ENCODE measurements at regions of chr1 and their contacts with region 1.

Region 1: GRCh38 chr1:179293340-179294327 is at the start of gene SOAT1:
- DNase-seq: peak; percentile 93
- H3K4me3 Mint-ChIP-seq: peak within 1 kb of the TSS; percentile 95
- H3K27ac Mint-ChIP-seq: peak within 1 kb of the TSS; percentile 89
- H3K4me1 Mint-ChIP-seq: peaks cover 41% of the 10 kb centered on the region
- H3K27me3 Mint-ChIP-seq: no peaks in the 10 kb centered on the region
- total RNA-seq, gene SOAT1: 55.7 to 58.3 TPM

Region 2: GRCh38 chr1:179187043-179187442 is 106.6 kb before region 1 on chr1:
- CTCF ChIA-PET with region 1: no interaction called
- POLR2A ChIA-PET with region 1: no interaction called
- DNase-seq: no peak
- H3K4me3 Mint-ChIP-seq: no peak overlapping the region
- H3K27ac Mint-ChIP-seq: no peak overlapping the region
- H3K4me1 Mint-ChIP-seq: peaks cover 13% of the 10 kb centered on the region
- H3K27me3 Mint-ChIP-seq: no peaks in the 10 kb centered on the region

Region 3: GRCh38 chr1:179206812-179207211 is 86.8 kb before region 1 on chr1:
- CTCF ChIA-PET with region 1: no interaction called
- POLR2A ChIA-PET with region 1: no interaction called
- DNase-seq: no peak
- H3K4me3 Mint-ChIP-seq: no peak overlapping the region
- H3K27ac Mint-ChIP-seq: no peak overlapping the region
- H3K4me1 Mint-ChIP-seq: peaks cover 5% of the 10 kb centered on the region
- H3K27me3 Mint-ChIP-seq: no peaks in the 10 kb centered on the region

Region 4: GRCh38 chr1:179229214-179230140 is 64.2 kb before region 1 on chr1 and contains the start of gene ABL2:
- CTCF ChIA-PET with region 1: no interaction called
- POLR2A ChIA-PET with region 1: interaction called, 10 read pairs
- DNase-seq: peak; percentile 44
- H3K4me3 Mint-ChIP-seq: peak within 1 kb of the TSS; percentile 89
- H3K27ac Mint-ChIP-seq: peak within 1 kb of the TSS; percentile 63
- H3K4me1 Mint-ChIP-seq: peaks cover 26% of the 10 kb centered on the region
- H3K27me3 Mint-ChIP-seq: peaks cover 5% of the 10 kb centered on the region
- total RNA-seq, gene ABL2: 8.6 to 9.3 TPM